ENCODE measurements at regions of chr5 and their contacts with region 1.

Region 1: DNA sequence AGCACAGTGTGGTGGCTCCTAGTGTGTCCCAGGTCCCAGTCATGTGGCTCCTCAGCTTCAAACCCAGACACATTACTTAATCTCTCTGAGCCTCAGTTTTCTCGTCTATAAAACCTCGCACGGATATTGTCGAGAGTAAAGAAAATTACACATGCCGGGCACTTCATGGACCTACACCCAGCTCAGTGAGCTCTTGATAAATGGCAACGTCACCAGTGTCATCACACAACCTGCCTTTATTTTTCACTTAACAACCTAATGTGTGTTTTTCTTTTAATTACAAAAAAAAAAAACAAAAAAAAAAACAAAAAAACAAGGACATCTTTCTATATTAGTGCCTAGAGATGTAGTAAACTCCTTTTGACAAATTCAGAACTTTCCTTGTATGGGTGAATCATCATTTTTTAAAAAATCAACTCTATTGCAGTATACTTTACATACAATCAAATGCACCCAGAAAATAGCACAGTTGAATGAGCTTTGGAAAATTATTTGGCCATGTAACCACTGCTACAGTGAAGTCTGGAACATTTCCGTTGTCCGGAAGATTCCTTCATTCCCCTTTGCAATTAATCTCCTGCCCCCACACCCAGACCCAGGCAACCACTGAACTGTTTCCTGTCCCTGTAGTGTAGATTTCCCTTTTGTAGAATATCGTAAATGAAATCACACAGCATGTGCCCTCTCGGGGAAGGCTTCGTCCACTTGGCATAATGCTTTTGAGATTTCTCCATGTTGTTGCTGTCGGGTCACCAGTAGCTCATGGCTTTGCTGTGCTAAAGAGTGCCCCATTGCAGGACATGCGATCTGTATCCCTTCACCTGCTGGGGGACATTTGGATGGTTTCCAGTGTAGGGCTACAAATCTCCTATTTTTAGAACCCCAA is 100.4 kb upstream of the LARP1 start:
- DNase-seq: no peak
- H3K4me3 Mint-ChIP-seq: no peak overlapping the region
- H3K27ac Mint-ChIP-seq: peak overlapping the region; percentile 57
- H3K4me1 Mint-ChIP-seq: peaks cover 9% of the 10 kb centered on the region
- H3K27me3 Mint-ChIP-seq: no peaks in the 10 kb centered on the region
- CTCF ChIP-seq: no peak

Region 2: DNA sequence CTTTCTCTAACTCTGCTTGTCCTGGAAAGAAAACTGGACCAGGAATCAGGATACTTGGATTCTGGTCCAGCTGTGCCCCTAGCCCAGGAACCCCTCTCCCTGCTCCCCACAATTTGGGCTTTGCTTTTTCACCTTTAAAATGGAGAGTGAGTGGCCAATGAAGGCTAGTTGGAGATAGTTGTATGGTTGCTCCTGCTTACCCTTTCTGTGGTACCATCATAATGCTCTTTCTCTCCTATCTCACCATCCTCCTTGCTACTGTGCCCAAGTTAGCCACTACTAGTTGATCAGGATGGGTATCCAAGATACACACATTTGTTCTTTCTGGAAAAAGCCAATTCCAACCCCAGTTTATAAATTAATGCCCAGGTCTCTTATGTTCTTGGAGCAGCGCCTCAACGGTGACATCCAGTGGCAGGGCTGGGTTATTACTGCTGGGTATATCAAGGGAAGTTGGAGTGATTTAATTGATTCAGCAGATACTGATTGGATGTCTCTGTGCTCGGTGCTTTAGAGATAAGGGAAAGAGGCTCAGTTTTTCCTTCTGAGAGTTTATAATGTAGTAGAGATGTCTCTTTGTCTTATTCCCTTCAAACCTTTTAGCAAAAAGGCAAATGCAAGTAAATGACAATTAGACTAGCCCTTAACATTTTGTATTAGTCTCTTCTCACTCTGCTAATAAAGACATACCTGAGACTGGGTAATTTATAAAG is 157.1 kb after region 1 on chr5:
- CTCF ChIA-PET with region 1: interaction called, 37 read pairs
- POLR2A ChIA-PET with region 1: interaction called, 4 read pairs
- intact Hi-C with region 1: loop called (anchors 1 kb)
- DNase-seq: peak; percentile 77
- H3K4me3 Mint-ChIP-seq: no peak overlapping the region
- H3K27ac Mint-ChIP-seq: peak overlapping the region; percentile 4
- H3K4me1 Mint-ChIP-seq: peaks cover 15% of the 10 kb centered on the region
- H3K27me3 Mint-ChIP-seq: no peaks in the 10 kb centered on the region
- CTCF ChIP-seq: peak; percentile 94

Region 3: GRCh38 chr5:154901276-154901675 is 246.5 kb after region 1 on chr5:
- CTCF ChIA-PET with region 1: interaction called, 7 read pairs
- POLR2A ChIA-PET with region 1: no interaction called
- intact Hi-C with region 1: loop called (anchors 10 kb)
- DNase-seq: no peak
- H3K4me3 Mint-ChIP-seq: no peak overlapping the region
- H3K27ac Mint-ChIP-seq: no peak overlapping the region
- H3K4me1 Mint-ChIP-seq: no peaks in the 10 kb centered on the region
- H3K27me3 Mint-ChIP-seq: no peaks in the 10 kb centered on the region
- CTCF ChIP-seq: no peak